Activated T-helper 2 cell treated with anti-CD3 and anti-CD28 coated beads, Interferon-gamma antibody, Interleukin-2, Interleukin-4, amounts not matched to agents 10 μg/mL and 5 μg/mL and 100 μg/mL, durations not matched to agents 14 hours and 24 hours and 36 hours (primary cell): ENCODE measurements at regions of chr19 and their contacts with region 1.

Region 1: GRCh38 chr19:14198384-14199376 is 7.3 kb downstream of the ADGRL1 start:
- DNase-seq: no peak
- H3K4me3 Mint-ChIP-seq: no peak overlapping the region
- H3K27ac Mint-ChIP-seq: no peak overlapping the region
- H3K4me1 Mint-ChIP-seq: peaks cover 11% of the 10 kb centered on the region
- H3K27me3 Mint-ChIP-seq: peaks cover 5% of the 10 kb centered on the region

Region 2: GRCh38 chr19:14218620-14219330 is 20.1 kb after region 1 on chr19:
- intact Hi-C with region 1: no loop called
- DNase-seq: no peak
- H3K4me3 Mint-ChIP-seq: no peak overlapping the region
- H3K27ac Mint-ChIP-seq: no peak overlapping the region
- H3K4me1 Mint-ChIP-seq: peaks cover 11% of the 10 kb centered on the region
- H3K27me3 Mint-ChIP-seq: peaks cover 2% of the 10 kb centered on the region

Region 3: DNA sequence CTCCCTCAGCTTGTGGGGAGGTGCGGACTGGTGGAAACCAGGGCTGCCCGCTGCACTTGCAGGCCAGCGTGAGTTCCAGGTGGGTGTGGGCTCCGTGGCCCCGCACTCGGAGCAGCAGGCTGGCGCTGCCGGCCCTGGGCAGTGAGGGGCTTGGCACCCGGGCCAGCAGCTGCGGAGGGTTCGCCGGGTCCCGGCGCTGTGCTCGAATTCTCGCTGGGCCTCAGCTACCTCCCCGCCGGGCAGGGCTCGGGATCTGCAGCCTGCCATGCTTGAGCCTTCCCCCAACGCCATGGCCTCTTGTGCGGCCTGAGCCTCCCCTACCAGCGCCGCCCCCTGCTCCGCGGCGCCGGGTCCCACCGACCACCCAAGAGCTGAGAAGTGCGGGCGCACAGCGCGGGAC is 78.9 kb after region 1 on chr19:
- intact Hi-C with region 1: loop called (anchors 10 kb)
- DNase-seq: no peak
- H3K4me3 Mint-ChIP-seq: no peak overlapping the region
- H3K27ac Mint-ChIP-seq: no peak overlapping the region
- H3K4me1 Mint-ChIP-seq: peaks cover 5% of the 10 kb centered on the region
- H3K27me3 Mint-ChIP-seq: peaks cover 2% of the 10 kb centered on the region

Region 4: GRCh38 chr19:14347999-14348889 is 149.6 kb after region 1 on chr19:
- intact Hi-C with region 1: loop called (anchors 1 kb)
- DNase-seq: peak; percentile 54
- H3K4me3 Mint-ChIP-seq: peak overlapping the region; percentile 42
- H3K27ac Mint-ChIP-seq: peak overlapping the region; percentile 32
- H3K4me1 Mint-ChIP-seq: peaks cover 14% of the 10 kb centered on the region
- H3K27me3 Mint-ChIP-seq: no peaks in the 10 kb centered on the region

Region 5: GRCh38 chr19:14479975-14480699 is 281.5 kb after region 1 on chr19:
- intact Hi-C with region 1: loop called (anchors 10 kb)
- DNase-seq: peak; percentile 66
- H3K4me3 Mint-ChIP-seq: no peak overlapping the region
- H3K27ac Mint-ChIP-seq: no peak overlapping the region
- H3K4me1 Mint-ChIP-seq: peaks cover 9% of the 10 kb centered on the region
- H3K27me3 Mint-ChIP-seq: no peaks in the 10 kb centered on the region